ENCODE measurements at regions of chr14 and their contacts with region 1.

Region 1: DNA sequence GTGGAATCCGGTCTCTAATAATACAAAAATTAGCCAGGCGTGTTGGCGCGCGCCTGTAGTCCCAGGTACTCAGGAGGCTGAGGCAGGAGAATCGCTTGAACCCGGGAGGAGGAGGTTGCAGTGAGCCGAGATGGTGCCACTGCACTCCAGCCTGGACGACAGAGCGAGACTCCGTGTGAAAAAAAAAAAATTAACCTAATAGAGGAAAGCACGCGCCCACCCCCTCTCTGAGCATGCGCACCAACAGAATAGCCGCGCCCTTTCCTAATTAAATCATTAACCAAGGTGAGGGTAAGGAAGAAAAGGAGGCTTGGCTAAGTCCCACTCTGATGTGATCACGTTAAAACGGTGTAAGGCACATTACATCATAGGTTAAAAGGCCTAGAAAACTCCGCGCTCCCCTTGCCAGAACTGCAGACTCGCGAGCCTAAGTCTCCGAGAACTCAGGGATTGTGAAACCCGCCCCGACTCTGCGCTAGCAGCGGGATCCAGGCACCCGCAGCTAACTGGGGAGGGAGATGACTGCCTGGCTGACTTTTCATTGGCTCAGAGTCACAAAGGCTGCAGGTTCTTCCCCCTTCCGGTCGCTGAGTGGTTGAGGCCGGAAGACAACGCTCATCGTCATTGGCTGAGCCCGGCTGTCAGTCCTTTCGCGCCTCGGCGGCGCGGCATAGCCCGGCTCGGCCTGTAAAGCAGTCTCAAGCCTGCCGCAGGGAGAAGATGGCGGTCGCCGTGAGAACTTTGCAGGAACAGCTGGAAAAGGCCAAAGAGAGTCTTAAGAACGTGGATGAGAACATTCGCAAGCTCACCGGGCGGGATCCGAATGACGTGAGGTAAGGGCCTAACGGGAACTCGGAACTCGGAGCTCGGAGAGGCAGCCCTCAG is at the start of gene PNN:
- DNase-seq: peak; percentile 99
- H3K4me3 ChIP-seq: peak within 1 kb of the TSS; percentile 65 to 92 (median 90)
- H3K27ac ChIP-seq: peak within 1 kb of the TSS; percentile 87 to 96 (median 93)
- H3K4me1 ChIP-seq: peaks cover 0 to 29% (median 21%) of the 10 kb centered on the region in 4 donors
- H3K27me3 ChIP-seq: no peaks in the 10 kb centered on the region
- CTCF ChIP-seq: no peak
- EP300 ChIP-seq: peak in 1 of 4 donors; percentile 19
- POLR2A ChIP-seq: peak; percentile 90 to 91
- total RNA-seq, gene PNN: 36.4 to 65.9 (median 38.7) TPM

Region 2: GRCh38 chr14:38818555-38818954 is 356.2 kb before region 1 on chr14:
- intact Hi-C with region 1: no loop called
- DNase-seq: no peak
- H3K4me3 ChIP-seq: no peak overlapping the region
- H3K27ac ChIP-seq: no peak overlapping the region
- H3K4me1 ChIP-seq: no peaks in the 10 kb centered on the region
- H3K27me3 ChIP-seq: no peaks in the 10 kb centered on the region
- CTCF ChIP-seq: no peak
- EP300 ChIP-seq: no peak
- POLR2A ChIP-seq: no peak

Region 3: DNA sequence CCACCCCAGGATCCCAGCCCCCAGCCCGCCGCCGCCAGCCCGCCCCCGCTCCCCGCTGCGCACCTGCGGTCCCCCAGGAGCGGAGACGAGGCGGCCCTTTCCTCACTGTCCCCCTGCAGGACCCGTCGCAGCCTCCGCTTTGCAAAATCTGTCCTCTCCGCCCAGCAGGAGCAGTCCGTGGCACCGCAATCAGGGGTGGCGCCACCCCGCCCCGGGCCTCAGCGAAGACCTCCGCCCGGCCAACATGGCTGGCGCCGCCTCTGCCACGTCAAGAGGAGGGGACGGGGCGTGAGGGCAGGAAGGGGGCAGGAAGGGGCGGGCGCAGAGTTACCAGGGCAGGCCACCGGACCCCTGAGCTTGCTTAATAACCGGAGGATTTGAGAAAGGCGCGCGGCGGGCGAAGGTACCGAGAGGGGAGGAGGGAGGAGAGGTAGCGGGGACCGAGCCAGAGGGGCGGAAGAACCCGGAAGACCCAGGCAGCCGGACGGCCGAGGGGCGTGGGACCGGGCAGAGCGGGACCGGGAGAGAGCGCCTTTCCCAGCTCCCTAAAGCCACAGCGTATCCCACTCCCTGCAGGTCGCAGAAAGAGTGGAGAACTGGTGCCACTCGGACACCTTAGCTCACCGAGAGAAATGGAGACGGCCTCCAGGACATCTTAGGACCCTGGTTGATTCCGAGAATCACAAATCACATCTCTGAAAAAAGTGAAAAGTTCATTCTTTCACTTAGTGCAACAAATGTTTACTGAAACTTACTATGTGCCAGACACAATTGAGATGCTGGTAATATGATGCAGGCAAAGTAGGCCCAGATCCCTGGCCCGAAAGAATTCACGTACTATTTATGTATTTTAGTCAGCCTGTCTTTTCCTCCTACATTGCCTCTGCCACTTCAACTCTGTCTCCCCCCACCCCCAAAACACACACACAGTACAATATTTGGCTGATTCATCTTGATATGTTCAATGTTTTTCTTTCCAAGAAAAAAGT is 71.5 kb before region 1 on chr14 and contains the start of gene SEC23A:
- intact Hi-C with region 1: loop called (anchors 2 kb)
- DNase-seq: peak; percentile 95
- H3K4me3 ChIP-seq: peak within 1 kb of the TSS; percentile 82 to 96 (median 94)
- H3K27ac ChIP-seq: peak within 1 kb of the TSS; percentile 98 to 99 (median 98)
- H3K4me1 ChIP-seq: peaks cover 0 to 46% (median 36%) of the 10 kb centered on the region in 4 donors
- H3K27me3 ChIP-seq: no peaks in the 10 kb centered on the region
- CTCF ChIP-seq: no peak
- EP300 ChIP-seq: no peak
- POLR2A ChIP-seq: peak; percentile 88
- total RNA-seq, gene SEC23A: 118 to 235 (median 176) TPM

Region 4: GRCh38 chr14:39266871-39267591 is 92.2 kb after region 1 on chr14:
- intact Hi-C with region 1: loop called (anchors 2 kb)
- DNase-seq: peak; percentile 91
- H3K4me3 ChIP-seq: peak overlapping the region; percentile 57 to 74 (median 68)
- H3K27ac ChIP-seq: peak overlapping the region; percentile 93 to 97 (median 94)
- H3K4me1 ChIP-seq: peaks cover 0 to 39% (median 13%) of the 10 kb centered on the region in 4 donors
- H3K27me3 ChIP-seq: no peaks in the 10 kb centered on the region
- CTCF ChIP-seq: no peak
- EP300 ChIP-seq: no peak
- POLR2A ChIP-seq: peak in 1 of 2 donors; percentile 48

Region 5: GRCh38 chr14:39368261-39368959 is 193.6 kb after region 1 on chr14:
- intact Hi-C with region 1: loop called (anchors 10 kb)
- DNase-seq: peak; percentile 74
- H3K4me3 ChIP-seq: no peak overlapping the region
- H3K27ac ChIP-seq: no peak overlapping the region
- H3K4me1 ChIP-seq: peaks cover 0 to 4% (median 0%) of the 10 kb centered on the region in 4 donors
- H3K27me3 ChIP-seq: no peaks in the 10 kb centered on the region
- CTCF ChIP-seq: peak in 3 of 4 experiments; percentile 28 to 42 (median 35)
- EP300 ChIP-seq: no peak
- POLR2A ChIP-seq: no peak

Region 6: DNA sequence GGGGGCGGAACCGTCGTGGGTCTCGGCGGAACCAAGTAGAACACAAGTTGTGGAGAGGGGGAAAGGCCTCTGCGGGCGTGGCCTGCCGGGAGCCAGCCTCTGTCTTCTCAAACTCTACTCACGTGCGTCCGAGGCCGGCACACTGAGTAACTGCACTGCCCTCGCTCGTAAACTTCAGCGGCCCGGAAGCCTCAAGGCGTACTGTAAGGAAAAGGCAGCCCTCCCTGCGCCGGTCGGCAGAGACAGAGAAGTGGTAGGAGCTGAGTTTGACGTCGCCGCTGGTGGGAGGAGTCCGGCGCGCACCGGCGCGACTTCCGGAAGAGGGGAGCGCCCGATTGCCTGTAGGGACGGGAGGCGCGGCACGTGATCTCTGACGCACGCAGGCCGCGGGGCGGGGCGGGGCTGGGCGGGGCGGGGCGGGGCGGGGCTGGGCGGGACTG is 257.4 kb after region 1 on chr14 and contains the start of gene FBXO33:
- intact Hi-C with region 1: loop called (anchors 1 kb)
- DNase-seq: peak; percentile 99
- H3K4me3 ChIP-seq: peak within 1 kb of the TSS; percentile 82 to 95 (median 90)
- H3K27ac ChIP-seq: peak within 1 kb of the TSS; percentile 92 to 95 (median 94)
- H3K4me1 ChIP-seq: peaks cover 0 to 39% (median 34%) of the 10 kb centered on the region in 4 donors
- H3K27me3 ChIP-seq: no peaks in the 10 kb centered on the region
- CTCF ChIP-seq: no peak
- EP300 ChIP-seq: no peak
- POLR2A ChIP-seq: peak; percentile 12 to 27
- total RNA-seq, gene FBXO33: 7.2 to 12.2 (median 10.7) TPM